ENCODE measurements at regions of chr5 and their contacts with region 1.

Region 1: GRCh38 chr5:108260117-108260857 is 121.6 kb downstream of the FBXL17 start:
- DNase-seq: peak; percentile 72
- ATAC-seq: peak; percentile 95 to 96

Region 2: DNA sequence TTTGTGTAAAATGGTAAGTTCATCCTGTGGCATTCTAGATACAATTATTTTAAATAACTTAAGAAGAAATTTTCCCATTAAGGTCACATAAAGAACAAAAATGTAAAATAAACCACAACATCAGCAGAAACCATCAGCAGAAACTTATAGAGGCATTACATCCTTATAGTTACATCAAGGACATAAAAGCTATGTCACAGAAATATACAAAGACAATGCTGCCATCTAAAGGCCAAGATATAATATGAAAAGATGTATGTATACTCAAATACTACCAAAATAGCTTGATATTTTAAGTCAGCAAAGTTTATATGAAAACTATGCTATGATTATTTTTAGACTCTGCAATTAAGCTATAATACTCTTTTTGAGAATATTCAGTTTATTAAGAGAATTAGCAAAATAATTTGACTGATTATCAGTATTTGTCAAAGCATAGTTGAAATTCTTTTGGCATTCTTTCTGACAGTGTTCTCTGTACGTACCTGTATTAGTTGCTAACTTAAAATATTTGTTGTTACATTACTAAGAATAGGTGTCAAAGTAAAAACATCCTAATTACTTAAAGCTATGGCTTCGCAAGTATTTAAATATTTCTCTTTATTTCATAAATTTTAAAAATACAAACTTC is 85.4 kb after region 1 on chr5:
- intact Hi-C with region 1: loop called (anchors 5 to 10 kb)
- DNase-seq: no peak
- ATAC-seq: no peak

Region 3: GRCh38 chr5:108367679-108368334 is 107.5 kb after region 1 on chr5:
- intact Hi-C with region 1: no loop called
- DNase-seq: no peak
- ATAC-seq: no peak

Measured in left cardiac atrium (tissue), 4 donors.